ENCODE measurements at regions of chr17 and their contacts with region 1.

Region 1: GRCh38 chr17:5181509-5182305 is 10.0 kb downstream of the ZNF594 start:
- DNase-seq: no peak
- H3K4me3 Mint-ChIP-seq: no peak overlapping the region
- H3K27ac Mint-ChIP-seq: no peak overlapping the region
- H3K4me1 Mint-ChIP-seq: no peaks in the 10 kb centered on the region
- H3K27me3 Mint-ChIP-seq: no peaks in the 10 kb centered on the region

Region 2: DNA sequence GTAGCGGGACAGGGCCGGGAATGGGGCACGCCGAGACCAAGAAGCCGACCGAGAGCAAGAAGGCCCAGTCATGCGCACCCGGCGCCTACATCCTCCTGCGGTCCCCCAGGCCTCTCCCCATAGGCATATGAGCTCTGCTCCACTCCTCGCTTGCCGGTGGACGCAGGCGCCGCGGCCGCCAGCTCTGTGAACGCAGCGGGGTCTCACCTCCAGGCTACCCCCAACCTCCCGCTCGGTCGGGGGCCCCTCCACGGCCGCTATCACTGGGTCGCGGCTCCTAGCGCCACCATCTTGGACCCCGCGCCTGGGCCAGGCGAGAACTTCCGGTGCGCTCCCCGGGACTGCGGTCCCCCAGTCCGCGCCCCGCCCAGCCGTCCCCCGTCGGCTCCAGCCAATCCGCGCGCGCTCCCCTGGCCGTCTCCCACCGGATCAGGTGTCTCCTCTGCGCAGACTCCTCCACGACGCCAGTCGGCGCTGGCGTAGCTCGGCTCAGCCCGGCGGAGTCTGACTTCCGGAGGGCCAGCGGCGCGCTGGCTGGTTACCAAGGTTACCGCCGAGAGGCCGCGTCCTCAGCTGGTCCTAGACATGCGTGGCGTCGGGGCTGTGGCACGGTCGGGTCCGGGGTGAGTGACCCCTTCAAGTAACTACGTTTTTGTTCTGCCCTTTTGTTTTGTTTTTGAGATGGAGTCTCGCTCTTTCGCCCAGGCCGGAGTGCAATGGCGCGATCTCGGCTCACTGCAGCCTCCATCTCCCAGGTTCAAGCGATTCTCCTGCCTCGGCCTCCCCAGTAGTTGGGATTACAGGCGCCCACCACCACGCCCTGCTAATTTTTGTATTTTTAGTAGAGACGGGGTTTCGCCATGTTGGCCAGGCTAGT is 10.1 kb after region 1 on chr17 and contains the start of gene ZNF594:
- CTCF ChIA-PET with region 1: interaction called, 7 read pairs
- POLR2A ChIA-PET with region 1: interaction called, 13 read pairs
- DNase-seq: peak; percentile 97
- H3K4me3 Mint-ChIP-seq: peak within 1 kb of the TSS; percentile 93
- H3K27ac Mint-ChIP-seq: peak within 1 kb of the TSS; percentile 87
- H3K4me1 Mint-ChIP-seq: peaks cover 33% of the 10 kb centered on the region
- H3K27me3 Mint-ChIP-seq: no peaks in the 10 kb centered on the region
- total RNA-seq, gene ZNF594: 7.0 to 8.6 TPM